Breast epithelium (tissue), 4 donors: ENCODE measurements at regions of chr2 and their contacts with region 1.

Region 1: DNA sequence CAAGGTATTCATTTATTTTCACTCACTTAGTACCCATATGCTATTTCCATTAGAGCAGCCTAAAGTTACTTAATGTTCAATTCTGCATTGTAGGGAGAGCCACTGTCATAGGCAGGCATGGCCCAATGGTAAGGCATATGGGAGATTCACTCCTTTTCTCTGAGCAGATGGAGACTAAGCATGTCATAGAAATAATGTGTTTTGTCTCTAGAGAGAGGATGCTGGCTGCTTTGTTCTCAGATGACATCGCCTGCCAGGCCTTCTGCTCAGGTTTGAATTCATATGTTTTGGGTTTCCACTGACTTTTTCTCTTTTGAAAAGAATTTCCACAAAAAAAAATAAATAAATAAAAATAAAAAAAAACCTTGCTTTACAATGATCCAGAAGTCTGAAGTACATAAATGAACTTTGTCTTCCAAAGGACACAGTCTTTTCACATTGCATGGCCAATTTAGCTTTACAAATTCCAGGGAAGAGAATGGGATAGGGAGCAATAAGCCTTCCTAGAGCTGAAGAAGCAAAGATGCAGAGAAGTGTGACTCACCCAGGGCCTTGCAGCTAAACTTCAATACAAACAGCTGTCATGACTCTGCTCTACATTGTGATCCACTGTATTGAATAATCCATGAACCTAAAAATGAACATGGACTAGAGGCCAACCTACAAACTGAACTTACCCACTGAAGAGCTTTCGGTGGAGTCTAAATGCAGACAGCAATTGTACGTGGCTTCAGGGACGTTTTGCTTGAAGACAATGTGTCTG is 422.5 kb downstream of the CMPK2 start:
- DNase-seq: no peak
- H3K4me3 ChIP-seq: no peak overlapping the region
- H3K27ac ChIP-seq: no peak overlapping the region
- H3K4me1 ChIP-seq: no peaks in the 10 kb centered on the region
- H3K27me3 ChIP-seq: no peaks in the 10 kb centered on the region
- CTCF ChIP-seq: no peak
- POLR2A ChIP-seq: no peak

Region 2: GRCh38 chr2:5315512-5315911 is 1127.7 kb before region 1 on chr2:
- intact Hi-C with region 1: no loop called
- DNase-seq: no peak
- H3K4me3 ChIP-seq: no peak overlapping the region
- H3K27ac ChIP-seq: no peak overlapping the region
- H3K4me1 ChIP-seq: no peaks in the 10 kb centered on the region
- H3K27me3 ChIP-seq: no peaks in the 10 kb centered on the region
- CTCF ChIP-seq: no peak
- POLR2A ChIP-seq: no peak

Region 3: DNA sequence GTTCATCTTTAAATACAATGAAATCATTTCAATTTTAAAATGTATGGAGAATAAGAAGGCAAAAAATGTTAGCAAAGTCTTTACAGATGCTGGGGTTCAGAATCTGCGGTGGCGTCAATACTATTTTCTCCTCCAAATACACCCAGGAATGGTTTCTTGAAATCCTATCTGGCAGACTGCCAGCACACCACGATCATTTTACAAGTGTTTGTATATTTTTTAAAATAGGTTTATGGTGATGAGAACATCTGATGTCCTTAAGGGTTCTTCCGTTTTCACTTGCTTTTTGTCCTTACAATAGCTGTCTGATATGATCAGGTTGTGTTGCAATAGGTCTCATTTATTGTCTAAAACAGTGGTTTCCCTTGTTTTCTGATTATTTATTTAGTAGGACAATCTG is 332.9 kb after region 1 on chr2:
- intact Hi-C with region 1: loop called (anchors 5 kb)
- DNase-seq: no peak
- H3K4me3 ChIP-seq: no peak overlapping the region
- H3K27ac ChIP-seq: no peak overlapping the region
- H3K4me1 ChIP-seq: no peaks in the 10 kb centered on the region
- H3K27me3 ChIP-seq: peaks cover 0 to 27% of the 10 kb centered on the region in 2 donors
- CTCF ChIP-seq: no peak
- POLR2A ChIP-seq: no peak

Region 4: DNA sequence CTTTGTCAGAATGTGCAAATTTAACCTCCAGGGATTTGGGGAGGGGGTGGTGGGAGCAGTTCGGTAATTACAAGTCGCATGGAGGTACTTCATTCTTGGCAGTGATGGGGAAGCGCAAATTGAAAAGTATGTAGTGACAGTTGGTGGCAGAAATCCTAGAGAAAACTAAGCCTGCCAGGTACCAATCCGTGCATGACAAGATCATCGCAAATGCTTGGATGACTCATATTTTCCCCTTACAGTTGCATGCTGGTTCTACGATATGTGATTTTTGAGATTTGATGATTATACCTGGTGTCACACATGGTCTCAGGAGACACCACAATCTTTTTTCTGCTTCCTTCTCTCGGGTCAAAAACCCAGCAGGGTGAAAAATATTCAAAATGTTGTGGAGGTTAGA is 1758.9 kb after region 1 on chr2:
- intact Hi-C with region 1: no loop called
- DNase-seq: no peak
- H3K4me3 ChIP-seq: no peak overlapping the region
- H3K27ac ChIP-seq: no peak overlapping the region
- H3K4me1 ChIP-seq: no peaks in the 10 kb centered on the region
- H3K27me3 ChIP-seq: no peaks in the 10 kb centered on the region
- CTCF ChIP-seq: no peak
- POLR2A ChIP-seq: no peak